ENCODE measurements at regions of chr6 and their contacts with region 1.

Region 1: GRCh38 chr6:33172688-33173534 is 19.4 kb downstream of the COL11A2 start:
- DNase-seq: peak in 1 of 9 experiments; percentile 36
- ATAC-seq: no peak
- H3K4me3 ChIP-seq: no peak overlapping the region
- H3K4me3 Mint-ChIP-seq: no peak overlapping the region
- H3K27ac ChIP-seq: no peak overlapping the region
- H3K27ac Mint-ChIP-seq: no peak overlapping the region
- H3K4me1 ChIP-seq: no peaks in the 10 kb centered on the region
- H3K4me1 Mint-ChIP-seq: no peaks in the 10 kb centered on the region
- H3K27me3 ChIP-seq: peaks cover 0 to 2% of the 10 kb centered on the region in 2 experiments
- H3K27me3 Mint-ChIP-seq: peaks cover 4% of the 10 kb centered on the region
- CTCF ChIP-seq: no peak

Region 2: DNA sequence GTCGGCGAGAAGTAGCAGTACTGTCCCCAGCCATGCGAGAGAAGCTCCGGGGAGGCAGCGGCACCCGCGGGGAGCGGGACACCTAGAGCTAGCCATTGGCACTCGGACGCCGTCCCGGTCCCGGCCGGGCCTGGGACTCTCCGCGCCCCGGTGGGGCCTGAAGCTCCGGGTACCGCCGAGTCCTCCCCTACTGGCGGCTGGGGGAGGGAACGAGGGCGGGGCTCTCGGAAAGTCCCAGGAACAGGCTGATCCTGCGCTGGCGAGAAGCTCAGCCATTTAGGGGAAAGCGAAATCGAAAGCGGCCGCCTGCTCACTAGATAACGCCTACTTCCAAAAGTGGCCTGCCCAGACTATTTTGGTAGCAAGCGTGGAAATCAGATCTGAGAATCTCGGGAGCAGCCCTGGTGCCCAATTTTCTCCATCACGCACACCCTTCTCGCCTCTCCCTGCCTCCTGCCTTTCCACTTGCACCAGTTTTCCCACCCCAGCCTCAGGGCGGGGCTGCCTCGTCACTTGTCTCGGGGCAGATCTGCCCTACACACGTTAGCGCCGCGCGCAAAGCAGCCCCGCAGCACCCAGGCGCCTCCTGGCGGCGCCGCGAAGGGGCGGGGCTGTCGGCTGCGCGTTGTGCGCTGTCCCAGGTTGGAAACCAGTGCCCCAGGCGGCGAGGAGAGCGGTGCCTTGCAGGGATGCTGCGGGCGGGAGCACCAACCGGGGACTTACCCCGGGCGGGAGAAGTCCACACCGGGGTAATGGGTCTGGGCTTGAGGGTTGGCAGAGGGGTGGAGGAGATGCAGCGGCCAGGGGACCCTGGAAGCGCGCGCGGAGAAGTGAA is 319.2 kb before region 1 on chr6 and contains the starts of genes PSMB9 and TAP1:
- CTCF ChIA-PET with region 1: no interaction called
- POLR2A ChIA-PET with region 1: no interaction called
- intact Hi-C with region 1: no loop called
- DNase-seq: peak; percentile 83 to 99 (median 94)
- ATAC-seq: peak; percentile 78
- H3K4me3 ChIP-seq: peak within 1 kb of the TSS; percentile 85 to 99
- H3K4me3 Mint-ChIP-seq: peak within 1 kb of the TSS; percentile 99
- H3K27ac ChIP-seq: peak within 1 kb of the TSS; percentile 98
- H3K27ac Mint-ChIP-seq: peak within 1 kb of the TSS; percentile 100
- H3K4me1 ChIP-seq: peaks cover 62% of the 10 kb centered on the region
- H3K4me1 Mint-ChIP-seq: peaks cover 69% of the 10 kb centered on the region
- H3K27me3 ChIP-seq: no peaks in the 10 kb centered on the region
- H3K27me3 Mint-ChIP-seq: no peaks in the 10 kb centered on the region
- CTCF ChIP-seq: peak; percentile 89
- total RNA-seq, gene PSMB9: 32.9 to 34.7 TPM
- total RNA-seq, gene TAP1: 98.0 to 98.1 TPM

Region 3: GRCh38 chr6:33161354-33162331 is 11.3 kb before region 1 on chr6:
- CTCF ChIA-PET with region 1: interaction called, 25 read pairs
- POLR2A ChIA-PET with region 1: no interaction called
- intact Hi-C with region 1: no loop called
- DNase-seq: peak; percentile 74 to 91 (median 85)
- ATAC-seq: peak; percentile 97
- H3K4me3 ChIP-seq: peak overlapping the region; percentile 50
- H3K4me3 Mint-ChIP-seq: peak overlapping the region; percentile 86
- H3K27ac ChIP-seq: no peak overlapping the region
- H3K27ac Mint-ChIP-seq: no peak overlapping the region
- H3K4me1 ChIP-seq: peaks cover 8% of the 10 kb centered on the region
- H3K4me1 Mint-ChIP-seq: peaks cover 14% of the 10 kb centered on the region
- H3K27me3 ChIP-seq: no peaks in the 10 kb centered on the region
- H3K27me3 Mint-ChIP-seq: peaks cover 4% of the 10 kb centered on the region
- CTCF ChIP-seq: peak; percentile 92

Measured in CD8-positive, alpha-beta T cell (primary cell).